Sciatic nerve (tissue), 2 donors: ENCODE measurements at regions of chr17 and their contacts with region 1.

Region 1: DNA sequence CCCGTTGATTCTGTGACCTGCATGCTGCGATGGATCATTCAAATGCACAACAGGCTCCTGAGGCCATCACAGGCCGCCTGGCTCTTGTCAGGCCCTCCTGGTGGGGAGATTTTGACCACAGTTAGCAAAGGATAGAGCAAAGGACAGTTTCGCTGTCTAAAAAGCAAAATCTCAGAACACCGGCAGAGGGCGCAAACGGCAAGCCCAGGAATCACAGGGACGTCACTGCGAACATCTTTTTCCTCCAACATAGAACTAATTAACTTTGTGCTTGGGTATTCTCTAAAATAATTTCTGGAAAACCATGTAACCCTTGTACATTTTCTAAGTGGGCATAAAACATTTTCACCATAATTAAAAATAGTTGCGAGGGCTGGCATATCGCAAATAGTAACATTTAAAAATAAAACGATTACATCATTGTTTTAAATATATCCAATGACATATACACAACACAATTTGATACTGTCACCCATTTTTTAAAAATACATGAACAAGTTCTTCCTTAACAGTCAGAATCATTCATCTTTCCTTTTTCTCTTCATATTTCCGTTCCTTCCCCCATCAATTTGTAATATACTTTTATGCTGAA is 19.7 kb upstream of the SLC47A1 start:
- DNase-seq: peak; percentile 80
- ATAC-seq: peak; percentile 84

Region 2: GRCh38 chr17:19664136-19664820 is 150.3 kb after region 1 on chr17:
- intact Hi-C with region 1: no loop called
- DNase-seq: no peak
- ATAC-seq: no peak

Region 3: GRCh38 chr17:19766422-19767270 is 252.7 kb after region 1 on chr17:
- intact Hi-C with region 1: loop called (anchors 2 kb)
- DNase-seq: peak; percentile 92
- ATAC-seq: peak; percentile 91